ENCODE measurements at regions of chr6 and their contacts with region 1.

Region 1: GRCh38 chr6:90121982-90122381 is 174.7 kb downstream of the BACH2 start:
- DNase-seq: no peak
- ATAC-seq: peak; percentile 92
- H3K4me3 Mint-ChIP-seq: peak overlapping the region; percentile 53
- H3K27ac Mint-ChIP-seq: peak overlapping the region; percentile 79
- H3K4me1 Mint-ChIP-seq: peaks cover 81% of the 10 kb centered on the region
- H3K27me3 Mint-ChIP-seq: no peaks in the 10 kb centered on the region
- CTCF ChIP-seq: no peak

Region 2: GRCh38 chr6:90103056-90103800 is 18.8 kb before region 1 on chr6:
- CTCF ChIA-PET with region 1: interaction called, 10 read pairs
- POLR2A ChIA-PET with region 1: interaction called, 21 read pairs
- intact Hi-C with region 1: loop called (anchors 1 kb)
- DNase-seq: no peak
- ATAC-seq: peak; percentile 47
- H3K4me3 Mint-ChIP-seq: peak overlapping the region; percentile 78
- H3K27ac Mint-ChIP-seq: peak overlapping the region; percentile 74
- H3K4me1 Mint-ChIP-seq: peaks cover 97% of the 10 kb centered on the region
- H3K27me3 Mint-ChIP-seq: no peaks in the 10 kb centered on the region
- CTCF ChIP-seq: no peak

Region 3: DNA sequence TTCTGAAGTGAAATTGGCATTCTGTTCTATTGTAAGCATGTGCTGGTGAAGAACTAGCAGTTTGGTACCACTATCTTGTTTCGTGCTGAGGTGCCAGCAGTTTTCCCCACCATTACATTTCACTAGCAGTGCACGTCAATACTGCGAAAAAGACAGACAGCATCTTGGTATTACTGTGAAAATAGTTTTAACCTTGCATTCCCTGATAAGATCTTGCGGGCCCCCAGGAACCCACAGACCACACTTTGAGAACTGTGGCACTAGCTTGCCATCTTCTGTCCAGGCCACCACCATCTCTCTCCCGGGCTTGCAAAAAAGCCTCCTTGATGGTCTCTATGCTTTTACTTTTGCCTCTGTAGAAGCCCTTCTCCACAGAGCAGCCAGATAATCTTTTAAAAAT is 11.0 kb before region 1 on chr6:
- CTCF ChIA-PET with region 1: interaction called, 10 read pairs
- POLR2A ChIA-PET with region 1: interaction called, 21 read pairs
- intact Hi-C with region 1: loop called (anchors 1 kb)
- DNase-seq: no peak
- ATAC-seq: no peak
- H3K4me3 Mint-ChIP-seq: no peak overlapping the region
- H3K27ac Mint-ChIP-seq: peak overlapping the region; percentile 86
- H3K4me1 Mint-ChIP-seq: peaks cover 82% of the 10 kb centered on the region
- H3K27me3 Mint-ChIP-seq: no peaks in the 10 kb centered on the region
- CTCF ChIP-seq: no peak

Region 4: DNA sequence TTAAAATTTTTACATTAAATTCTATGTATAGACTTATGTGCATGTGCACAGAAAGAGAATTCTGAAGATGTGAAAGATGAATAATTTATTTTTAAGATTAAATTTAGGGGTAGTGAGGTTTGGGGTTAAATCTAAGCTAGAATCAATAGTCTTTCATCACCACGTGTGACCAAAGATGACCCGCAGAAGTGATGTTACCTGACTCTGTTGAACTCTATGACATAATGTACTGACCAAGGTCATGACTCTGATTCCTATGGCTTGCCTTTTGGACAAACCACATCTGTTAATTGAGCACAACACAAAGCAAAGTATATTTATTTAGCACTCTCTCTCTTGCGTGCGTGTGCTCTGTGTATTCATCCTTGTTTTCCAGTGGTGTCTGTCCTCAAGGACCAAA is 24.0 kb after region 1 on chr6:
- CTCF ChIA-PET with region 1: no interaction called
- POLR2A ChIA-PET with region 1: no interaction called
- intact Hi-C with region 1: no loop called
- DNase-seq: no peak
- ATAC-seq: no peak
- H3K4me3 Mint-ChIP-seq: no peak overlapping the region
- H3K27ac Mint-ChIP-seq: peak overlapping the region; percentile 84
- H3K4me1 Mint-ChIP-seq: peaks cover 80% of the 10 kb centered on the region
- H3K27me3 Mint-ChIP-seq: no peaks in the 10 kb centered on the region
- CTCF ChIP-seq: no peak

Region 5: DNA sequence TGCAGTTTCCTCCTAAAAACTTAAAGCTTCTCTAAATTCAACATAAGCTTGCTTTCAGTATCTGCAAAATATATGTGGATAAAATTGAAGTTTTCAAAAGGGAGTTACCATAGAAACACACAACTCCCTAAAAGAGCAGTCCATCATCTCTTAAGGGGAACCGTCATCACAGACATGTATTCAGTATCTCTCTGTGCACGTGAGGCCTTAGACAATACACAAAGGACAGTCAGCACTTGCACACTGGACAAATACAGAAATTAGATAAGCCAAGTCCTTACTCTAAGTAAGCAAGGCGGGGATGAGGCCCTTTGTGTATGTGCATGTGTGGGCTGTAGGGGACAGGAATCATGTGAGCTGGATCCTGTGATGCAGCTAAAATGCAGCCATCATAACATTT is 38.0 kb after region 1 on chr6:
- CTCF ChIA-PET with region 1: no interaction called
- POLR2A ChIA-PET with region 1: interaction called, 3 read pairs
- intact Hi-C with region 1: loop called (anchors 1 kb)
- DNase-seq: no peak
- ATAC-seq: peak; percentile 34
- H3K4me3 Mint-ChIP-seq: peak overlapping the region; percentile 13
- H3K27ac Mint-ChIP-seq: peak overlapping the region; percentile 64
- H3K4me1 Mint-ChIP-seq: peaks cover 78% of the 10 kb centered on the region
- H3K27me3 Mint-ChIP-seq: no peaks in the 10 kb centered on the region
- CTCF ChIP-seq: no peak

Region 6: GRCh38 chr6:90274451-90275030 is 152.6 kb after region 1 on chr6:
- CTCF ChIA-PET with region 1: no interaction called
- POLR2A ChIA-PET with region 1: no interaction called
- intact Hi-C with region 1: loop called (anchors 1 kb)
- DNase-seq: peak; percentile 43
- ATAC-seq: peak; percentile 84
- H3K4me3 Mint-ChIP-seq: peak overlapping the region; percentile 64
- H3K27ac Mint-ChIP-seq: peak overlapping the region; percentile 85
- H3K4me1 Mint-ChIP-seq: peaks cover 93% of the 10 kb centered on the region
- H3K27me3 Mint-ChIP-seq: no peaks in the 10 kb centered on the region
- CTCF ChIP-seq: no peak

Measured in activated B cell treated with CpG ODN at 0.5 μM for 24 hours (primary cell).